ENCODE measurements at regions of chr16 and their contacts with region 1.

Region 1: GRCh38 chr16:234468-235305 is at the start of gene FAM234A:
- DNase-seq: peak; percentile 96 to 98 (median 97)
- ATAC-seq: peak; percentile 95 to 96
- H3K4me3 ChIP-seq: peak within 1 kb of the TSS; percentile 81
- H3K27ac ChIP-seq: peak within 1 kb of the TSS; percentile 90
- H3K4me1 ChIP-seq: no peaks in the 10 kb centered on the region
- H3K27me3 ChIP-seq: no peaks in the 10 kb centered on the region
- total RNA-seq, gene FAM234A: 131 to 145 (median 139) TPM

Region 2: GRCh38 chr16:117379-118365 is 117.0 kb before region 1 on chr16:
- intact Hi-C with region 1: no loop called
- DNase-seq: peak; percentile 58 to 79 (median 79)
- ATAC-seq: peak; percentile 47 to 48
- H3K4me3 ChIP-seq: no peak overlapping the region
- H3K27ac ChIP-seq: no peak overlapping the region
- H3K4me1 ChIP-seq: peaks cover 3% of the 10 kb centered on the region
- H3K27me3 ChIP-seq: no peaks in the 10 kb centered on the region

Region 3: GRCh38 chr16:352547-353403 is 118.1 kb after region 1 on chr16 and contains the start of gene AXIN1:
- intact Hi-C with region 1: loop called in 2 of 4 experiments (anchors 5 to 10 kb)
- DNase-seq: peak; percentile 99 to 100 (median 100)
- ATAC-seq: peak; percentile 95
- H3K4me3 ChIP-seq: peak within 1 kb of the TSS; percentile 92
- H3K27ac ChIP-seq: no peak within 1 kb of the TSS
- H3K4me1 ChIP-seq: no peaks in the 10 kb centered on the region
- H3K27me3 ChIP-seq: no peaks in the 10 kb centered on the region
- total RNA-seq, gene AXIN1: 8.4 to 12.2 (median 10.6) TPM

Region 4: DNA sequence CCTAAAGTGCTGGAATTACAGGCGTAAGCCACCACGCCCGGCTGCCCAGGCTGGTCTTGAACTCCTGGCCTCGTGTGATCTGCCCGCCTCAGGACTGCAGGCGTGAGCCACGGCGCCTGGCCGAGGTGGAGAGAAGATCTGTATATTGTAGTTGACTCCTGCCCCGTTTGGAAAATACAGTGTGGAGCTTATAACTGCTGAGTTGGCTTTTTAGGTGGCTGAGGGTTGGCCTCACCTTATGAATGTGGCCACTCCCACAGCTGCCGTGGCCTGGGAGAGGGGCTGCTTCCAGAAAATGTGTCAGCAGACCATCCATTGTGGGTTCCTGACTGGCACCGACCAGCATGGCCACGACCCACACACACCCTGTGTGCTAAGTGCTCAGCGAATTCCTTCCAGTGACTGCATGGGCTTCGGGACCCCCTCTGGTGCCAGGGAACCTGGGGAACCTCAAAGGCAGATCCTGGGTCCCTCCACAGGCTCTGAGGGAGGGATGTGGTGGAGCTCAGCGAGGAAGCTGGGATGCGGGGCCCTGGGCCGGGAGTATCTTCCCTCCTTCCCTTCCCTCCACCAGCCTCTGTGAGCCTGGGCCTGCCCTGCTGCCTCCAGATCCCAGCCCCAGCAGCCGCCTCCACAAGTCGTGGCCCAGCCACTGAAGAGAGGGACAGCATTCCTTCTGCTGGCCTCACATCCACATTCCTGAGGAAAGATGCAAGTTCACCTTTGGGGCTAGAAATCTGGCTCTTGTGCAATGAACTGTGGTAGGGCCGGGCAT is 179.9 kb after region 1 on chr16:
- intact Hi-C with region 1: no loop called
- DNase-seq: peak in 1 of 3 donors; percentile 35
- ATAC-seq: no peak
- H3K4me3 ChIP-seq: no peak overlapping the region
- H3K27ac ChIP-seq: no peak overlapping the region
- H3K4me1 ChIP-seq: no peaks in the 10 kb centered on the region
- H3K27me3 ChIP-seq: no peaks in the 10 kb centered on the region

Region 5: DNA sequence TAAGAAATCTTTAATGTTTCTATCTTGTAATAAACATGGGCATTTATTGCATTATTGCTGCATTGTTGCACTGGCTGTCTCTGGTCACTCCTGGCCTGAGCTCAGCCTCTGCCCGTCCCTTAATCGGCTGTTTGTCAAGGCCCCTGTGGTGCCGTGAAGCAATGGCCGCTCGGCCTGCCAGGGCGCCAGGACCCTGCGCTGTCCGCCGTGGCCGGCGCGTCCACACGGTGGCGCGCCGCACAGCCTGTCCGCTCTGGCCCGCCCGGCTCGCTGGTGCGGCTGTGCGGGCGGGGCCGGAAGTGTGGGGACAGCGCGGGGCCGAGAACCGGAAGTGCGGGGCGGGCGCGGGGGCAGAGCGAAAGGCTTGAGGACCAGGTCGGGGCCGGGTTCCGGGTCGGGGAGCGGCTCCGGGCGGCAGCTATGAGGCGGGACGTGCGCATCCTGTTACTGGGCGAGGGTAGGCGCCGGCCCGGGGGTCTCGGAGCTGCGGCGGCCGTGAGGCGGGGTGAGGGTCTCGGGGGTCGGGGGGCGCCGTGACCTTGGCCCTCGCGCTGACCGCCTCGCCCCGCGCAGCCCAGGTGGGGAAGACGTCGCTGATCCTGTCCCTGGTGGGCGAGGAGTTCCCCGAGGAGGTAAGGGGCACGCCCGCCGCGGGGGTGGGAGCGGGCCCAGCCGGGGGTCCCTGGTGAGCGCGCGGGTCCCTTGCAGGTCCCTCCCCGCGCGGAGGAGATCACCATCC is 433.3 kb after region 1 on chr16 and contains the start of gene RHOT2:
- intact Hi-C with region 1: no loop called
- DNase-seq: peak; percentile 94 to 98 (median 98)
- ATAC-seq: peak; percentile 88 to 90
- H3K4me3 ChIP-seq: peak within 1 kb of the TSS; percentile 89
- H3K27ac ChIP-seq: peak within 1 kb of the TSS; percentile 58
- H3K4me1 ChIP-seq: peaks cover 3% of the 10 kb centered on the region
- H3K27me3 ChIP-seq: no peaks in the 10 kb centered on the region
- total RNA-seq, gene RHOT2: 84.3 to 104 (median 90.8) TPM

Measured in right cardiac atrium (tissue), 5 donors.